ENCODE measurements at regions of chr16 and their contacts with region 1.

Region 1: GRCh38 chr16:85986931-85987749 is 88.2 kb downstream of the IRF8 start:
- DNase-seq: peak; percentile 71
- H3K4me3 ChIP-seq: no peak overlapping the region
- H3K27ac ChIP-seq: no peak overlapping the region
- H3K4me1 ChIP-seq: peaks cover 56% of the 10 kb centered on the region
- CTCF ChIP-seq: peak; percentile 59

Region 2: DNA sequence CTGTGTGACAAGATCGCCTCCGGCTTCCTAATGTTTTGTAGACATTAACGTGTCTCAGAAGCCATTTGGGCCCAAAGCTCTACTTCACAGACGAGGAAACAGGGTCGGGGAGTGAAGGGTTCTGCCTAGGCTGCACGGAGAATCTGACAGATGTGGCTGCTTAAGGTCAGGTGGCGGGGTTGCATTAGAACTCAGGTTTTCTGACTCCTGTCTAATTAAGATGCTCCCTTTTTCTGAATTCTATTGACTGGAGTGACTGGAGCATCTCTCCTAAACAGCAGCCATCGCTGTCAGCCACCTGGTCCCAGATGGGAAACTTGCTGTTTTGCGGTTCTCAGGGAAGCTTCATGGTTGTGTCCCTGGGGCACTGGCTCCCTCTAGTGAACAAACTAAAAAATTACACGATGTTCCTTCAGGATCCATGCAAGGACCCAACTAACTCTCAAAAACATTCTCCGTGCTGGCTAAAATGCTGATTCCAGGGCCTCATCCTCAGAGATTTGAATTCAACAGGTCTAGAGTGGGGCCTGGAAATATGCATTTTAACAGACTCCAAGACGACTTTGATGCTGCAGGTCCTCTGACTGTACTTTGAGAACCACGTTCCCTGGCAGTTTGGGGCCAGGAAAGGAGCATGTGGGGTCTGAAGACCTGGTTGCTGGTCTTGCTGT is 29.2 kb after region 1 on chr16:
- CTCF ChIA-PET with region 1: no interaction called
- POLR2A ChIA-PET with region 1: interaction called, 5 read pairs
- intact Hi-C with region 1: loop called (anchors 1 kb)
- DNase-seq: peak; percentile 75
- H3K4me3 ChIP-seq: no peak overlapping the region
- H3K27ac ChIP-seq: no peak overlapping the region
- H3K4me1 ChIP-seq: peaks cover 4% of the 10 kb centered on the region
- CTCF ChIP-seq: peak; percentile 94

Measured in OCI-LY7 (cell line).